GM12878 (cell line): ENCODE measurements at regions of chr12 and their contacts with region 1.

Region 1: DNA sequence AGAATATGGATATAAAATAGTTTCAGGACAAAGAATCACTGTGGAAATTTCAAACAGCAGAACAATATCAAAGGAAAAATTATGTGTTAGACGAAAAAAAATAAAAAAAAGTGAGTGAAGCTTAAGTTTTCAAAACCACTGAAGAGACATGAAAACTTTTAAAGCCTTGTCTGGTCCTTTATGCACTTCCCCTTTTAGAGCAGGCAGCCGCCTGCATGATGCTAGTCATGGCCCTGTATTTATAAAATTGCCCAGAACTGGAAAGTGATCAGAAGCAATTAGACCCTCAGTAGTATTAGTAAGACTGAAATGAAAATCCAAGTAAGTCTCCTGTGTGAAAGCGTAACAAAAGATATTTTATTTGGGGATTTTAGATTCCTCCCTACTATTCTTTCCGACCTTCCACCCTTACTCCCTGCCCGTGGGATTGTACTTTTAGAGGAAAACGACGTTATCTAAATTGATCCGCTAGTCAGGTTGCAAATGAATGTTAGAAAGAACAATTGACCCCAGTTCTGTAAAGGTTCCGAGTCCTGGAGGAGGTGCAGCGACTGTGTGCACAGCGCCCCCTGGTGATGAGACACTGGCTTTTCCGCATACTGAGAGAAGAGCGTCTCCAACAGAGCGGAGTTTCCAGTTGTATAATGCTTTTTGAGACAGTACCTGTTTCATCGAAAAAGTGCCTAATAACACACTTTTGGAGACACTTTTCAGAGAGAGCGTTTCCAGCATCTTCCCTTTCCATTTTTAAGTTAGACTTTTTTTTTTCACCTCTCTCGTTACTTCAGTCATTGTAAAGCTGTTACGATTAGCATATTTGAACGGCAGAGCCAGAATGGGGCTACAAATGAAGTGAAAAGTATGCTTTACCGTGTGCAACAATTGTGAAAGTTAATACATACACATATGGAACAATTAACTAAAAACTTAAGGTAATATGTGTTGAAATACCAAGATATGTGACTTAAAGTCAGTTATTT is 12.4 kb downstream of the MGST1 start:
- DNase-seq: no peak
- ATAC-seq: peak; percentile 89
- H3K4me3 ChIP-seq: no peak overlapping the region
- H3K27ac ChIP-seq: no peak overlapping the region
- H3K4me1 ChIP-seq: no peaks in the 10 kb centered on the region
- H3K27me3 ChIP-seq: no peaks in the 10 kb centered on the region
- CTCF ChIP-seq: peak; percentile 50 to 68 (median 52)
- EP300 ChIP-seq: no peak
- POLR2A ChIP-seq: no peak
- RAD21 ChIP-seq: peak; percentile 41; the same call in 1 of the 2 replicates

Region 2: DNA sequence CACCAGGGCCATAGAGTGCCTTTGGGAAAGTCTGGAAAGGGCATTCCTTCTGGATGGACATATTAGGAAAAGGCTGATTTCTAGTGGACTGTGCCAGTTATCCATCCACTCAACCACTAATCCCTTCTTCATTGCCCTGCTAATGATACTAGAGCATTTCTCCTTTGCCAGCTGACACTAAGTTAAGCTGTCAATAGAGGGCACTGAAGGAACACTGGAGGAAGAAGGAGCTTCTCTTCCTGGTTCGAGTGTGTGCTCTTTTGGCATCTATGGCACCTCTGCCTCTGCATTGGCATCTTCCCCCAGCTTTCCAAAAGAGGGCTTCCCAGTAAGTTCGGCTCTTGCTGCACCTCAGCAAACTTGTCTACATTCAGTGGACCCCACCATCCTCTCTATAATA is 283.2 kb before region 1 on chr12:
- CTCF ChIA-PET with region 1: interaction called, 6 read pairs
- POLR2A ChIA-PET with region 1: no interaction called
- RAD21 ChIA-PET with region 1: no interaction called
- SMC1A ChIA-PET with region 1: interaction called, 7 read pairs
- in situ Hi-C with region 1: no loop called
- intact Hi-C with region 1: loop called (anchors 1 kb)
- DNase-seq: no peak
- ATAC-seq: peak; percentile 94
- H3K4me3 ChIP-seq: no peak overlapping the region
- H3K27ac ChIP-seq: no peak overlapping the region
- H3K4me1 ChIP-seq: no peaks in the 10 kb centered on the region
- H3K27me3 ChIP-seq: no peaks in the 10 kb centered on the region
- CTCF ChIP-seq: peak; percentile 44 to 75 (median 57); a peak in 4 of 6 replicates
- EP300 ChIP-seq: no peak
- POLR2A ChIP-seq: no peak
- RAD21 ChIP-seq: peak; percentile 70

Region 3: DNA sequence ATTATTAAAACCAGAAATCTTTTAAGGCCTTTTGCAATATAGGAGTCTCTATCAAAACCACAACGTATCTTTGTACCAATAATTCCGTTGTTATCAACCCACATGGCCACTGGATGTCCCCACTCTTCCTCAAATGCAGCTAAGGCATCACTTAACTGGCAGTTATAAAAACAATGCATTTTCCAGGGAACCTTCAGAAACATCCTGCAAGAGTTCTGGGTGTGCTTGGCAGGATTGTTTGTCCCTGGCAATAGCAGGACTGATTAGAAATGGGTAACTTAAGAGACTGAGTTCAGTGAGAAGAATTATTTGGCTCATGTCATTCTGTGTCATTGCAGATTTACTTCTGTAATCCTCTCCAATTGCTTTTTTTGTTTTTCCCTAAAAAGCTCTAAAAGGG is 194.3 kb before region 1 on chr12:
- CTCF ChIA-PET with region 1: interaction called, 21 read pairs
- POLR2A ChIA-PET with region 1: no interaction called
- RAD21 ChIA-PET with region 1: no interaction called
- SMC1A ChIA-PET with region 1: interaction called, 3 read pairs
- in situ Hi-C with region 1: no loop called
- intact Hi-C with region 1: loop called (anchors 1 kb)
- DNase-seq: no peak
- ATAC-seq: peak; percentile 54; the same call in 2 of the 3 replicates
- H3K4me3 ChIP-seq: no peak overlapping the region
- H3K27ac ChIP-seq: no peak overlapping the region
- H3K4me1 ChIP-seq: no peaks in the 10 kb centered on the region
- H3K27me3 ChIP-seq: no peaks in the 10 kb centered on the region; a peak in 1 of 4 replicates
- CTCF ChIP-seq: peak; percentile 27 to 69 (median 40); a peak in 4 of 6 replicates
- EP300 ChIP-seq: no peak
- POLR2A ChIP-seq: no peak
- RAD21 ChIP-seq: peak; percentile 79

Region 4: DNA sequence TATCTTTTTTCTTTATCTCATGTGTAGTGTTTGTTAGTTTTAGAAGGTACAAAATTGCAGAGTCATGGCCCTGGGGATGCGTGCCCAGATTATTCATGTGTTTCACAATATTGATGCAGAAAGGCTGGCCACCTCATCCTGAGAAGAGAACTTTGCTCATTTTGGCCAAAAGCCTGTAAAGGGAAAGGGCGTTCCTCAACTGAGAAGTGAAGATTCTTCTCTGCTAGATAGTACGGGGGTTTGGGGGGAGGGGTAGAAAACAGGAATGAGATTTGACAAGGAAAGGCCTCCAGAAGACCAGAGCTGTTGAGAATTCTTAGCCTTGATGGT is 10.7 kb before region 1 on chr12:
- CTCF ChIA-PET with region 1: interaction called, 24 read pairs
- POLR2A ChIA-PET with region 1: no interaction called
- RAD21 ChIA-PET with region 1: no interaction called
- SMC1A ChIA-PET with region 1: interaction called, 4 read pairs
- in situ Hi-C with region 1: no loop called
- intact Hi-C with region 1: no loop called
- DNase-seq: peak; percentile 7
- ATAC-seq: peak; percentile 39
- H3K4me3 ChIP-seq: no peak overlapping the region
- H3K27ac ChIP-seq: no peak overlapping the region
- H3K4me1 ChIP-seq: no peaks in the 10 kb centered on the region
- H3K27me3 ChIP-seq: no peaks in the 10 kb centered on the region
- CTCF ChIP-seq: no peak
- EP300 ChIP-seq: no peak
- POLR2A ChIP-seq: no peak
- RAD21 ChIP-seq: no peak

Region 5: DNA sequence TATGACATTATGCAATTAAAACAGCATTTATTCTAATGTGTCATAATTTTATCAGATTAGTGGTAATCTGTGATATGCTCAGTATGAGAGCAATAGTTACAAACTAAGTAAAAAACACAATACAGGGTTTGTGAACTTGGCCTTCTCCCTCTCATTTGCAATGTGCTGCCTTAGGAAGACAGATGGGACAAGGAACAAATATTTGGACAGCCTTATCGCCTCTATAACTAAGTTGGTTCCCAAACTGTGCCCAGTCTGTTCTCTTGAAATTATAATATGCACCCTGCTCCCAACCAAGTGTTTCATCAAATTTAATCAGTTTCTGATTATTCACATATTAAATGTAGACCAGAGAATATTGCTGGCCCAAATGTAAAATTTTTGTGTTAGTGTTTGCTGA is 10.3 kb after region 1 on chr12:
- CTCF ChIA-PET with region 1: interaction called, 13 read pairs
- POLR2A ChIA-PET with region 1: no interaction called
- RAD21 ChIA-PET with region 1: interaction called, 4 read pairs
- SMC1A ChIA-PET with region 1: interaction called, 3 read pairs
- in situ Hi-C with region 1: no loop called
- intact Hi-C with region 1: no loop called
- DNase-seq: no peak
- ATAC-seq: no peak
- H3K4me3 ChIP-seq: no peak overlapping the region
- H3K27ac ChIP-seq: no peak overlapping the region
- H3K4me1 ChIP-seq: no peaks in the 10 kb centered on the region
- H3K27me3 ChIP-seq: no peaks in the 10 kb centered on the region
- CTCF ChIP-seq: no peak
- EP300 ChIP-seq: no peak
- POLR2A ChIP-seq: no peak
- RAD21 ChIP-seq: no peak